Naive thymus-derived CD4-positive, alpha-beta T cell (primary cell): ENCODE measurements at regions of chr22 and their contacts with region 1.

Region 1: GRCh38 chr22:19629720-19630419 is 84.4 kb upstream of the SEPTIN5 start:
- DNase-seq: peak; percentile 65 to 91 (median 86)
- ATAC-seq: peak; percentile 97
- H3K4me3 ChIP-seq: no peak overlapping the region
- H3K4me3 Mint-ChIP-seq: peak overlapping the region in 1 of 10 donors; percentile 26
- H3K27ac ChIP-seq: no peak overlapping the region
- H3K27ac Mint-ChIP-seq: peak overlapping the region in 3 of 9 donors; percentile 6 to 56 (median 43)
- H3K4me1 ChIP-seq: peaks cover 0 to 7% of the 10 kb centered on the region in 2 donors
- H3K4me1 Mint-ChIP-seq: peaks cover 3 to 22% (median 10%) of the 10 kb centered on the region in 7 donors
- H3K27me3 ChIP-seq: no peaks in the 10 kb centered on the region
- H3K27me3 Mint-ChIP-seq: peaks cover 0 to 3% (median 0%) of the 10 kb centered on the region in 5 donors

Region 2: GRCh38 chr22:19143967-19144400 is 485.9 kb before region 1 on chr22:
- CTCF ChIA-PET with region 1: interaction called, 3 read pairs
- POLR2A ChIA-PET with region 1: no interaction called
- intact Hi-C with region 1: loop called in 1 of 2 experiments (anchors 1 kb)
- DNase-seq: peak in 6 of 9 donors; percentile 8 to 40 (median 26)
- ATAC-seq: no peak
- H3K4me3 ChIP-seq: peak overlapping the region; percentile 83
- H3K4me3 Mint-ChIP-seq: peak overlapping the region; percentile 84 to 99 (median 98)
- H3K27ac ChIP-seq: peak overlapping the region; percentile 93
- H3K27ac Mint-ChIP-seq: peak overlapping the region; percentile 91 to 99 (median 97)
- H3K4me1 ChIP-seq: no peaks in the 10 kb centered on the region
- H3K4me1 Mint-ChIP-seq: peaks cover 8 to 32% (median 18%) of the 10 kb centered on the region in 7 donors
- H3K27me3 ChIP-seq: peaks cover 0 to 1% of the 10 kb centered on the region in 2 donors
- H3K27me3 Mint-ChIP-seq: peaks cover 9 to 33% (median 11%) of the 10 kb centered on the region in 5 donors

Region 3: DNA sequence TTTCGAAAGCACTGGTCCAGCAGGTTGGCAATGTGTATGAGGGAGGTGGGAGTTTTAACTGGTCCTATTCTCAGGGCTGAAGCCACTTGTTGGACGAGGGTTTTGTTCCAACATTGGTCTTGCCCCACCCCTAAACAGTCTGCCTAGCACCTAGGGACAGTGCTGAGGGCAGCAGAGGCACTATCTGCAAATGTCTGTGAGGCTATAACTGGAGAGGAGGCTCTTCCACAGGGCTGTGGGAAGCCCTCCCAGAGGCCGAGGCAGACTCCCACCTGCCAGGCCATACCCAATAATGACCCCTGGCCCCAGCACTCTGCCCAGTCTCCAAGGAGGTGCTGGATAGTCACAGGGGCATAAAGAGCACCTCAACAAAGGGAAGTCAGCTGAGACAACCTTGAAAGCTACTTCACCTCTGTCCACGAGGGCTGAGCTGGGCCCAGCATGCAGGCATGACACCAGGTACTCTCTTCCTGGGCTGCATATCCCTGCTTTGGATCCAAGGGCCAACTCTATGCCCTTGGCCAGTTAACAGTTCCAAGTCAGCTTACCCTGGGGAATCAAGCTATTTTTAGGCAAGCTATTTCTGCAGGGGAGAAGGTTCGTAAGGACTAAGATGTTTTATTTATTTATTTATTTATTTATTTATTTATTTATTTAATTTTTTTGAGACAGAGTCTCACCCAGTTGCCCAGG is 411.2 kb before region 1 on chr22:
- CTCF ChIA-PET with region 1: no interaction called
- POLR2A ChIA-PET with region 1: no interaction called
- intact Hi-C with region 1: loop called (anchors 1 to 2 kb)
- DNase-seq: no peak
- ATAC-seq: no peak
- H3K4me3 ChIP-seq: no peak overlapping the region
- H3K4me3 Mint-ChIP-seq: no peak overlapping the region
- H3K27ac ChIP-seq: no peak overlapping the region
- H3K27ac Mint-ChIP-seq: peak overlapping the region in 1 of 9 donors; percentile 40
- H3K4me1 ChIP-seq: no peaks in the 10 kb centered on the region
- H3K4me1 Mint-ChIP-seq: peaks cover 0 to 6% (median 4%) of the 10 kb centered on the region in 7 donors
- H3K27me3 ChIP-seq: no peaks in the 10 kb centered on the region
- H3K27me3 Mint-ChIP-seq: peaks cover 0 to 4% (median 0%) of the 10 kb centered on the region in 5 donors

Region 4: DNA sequence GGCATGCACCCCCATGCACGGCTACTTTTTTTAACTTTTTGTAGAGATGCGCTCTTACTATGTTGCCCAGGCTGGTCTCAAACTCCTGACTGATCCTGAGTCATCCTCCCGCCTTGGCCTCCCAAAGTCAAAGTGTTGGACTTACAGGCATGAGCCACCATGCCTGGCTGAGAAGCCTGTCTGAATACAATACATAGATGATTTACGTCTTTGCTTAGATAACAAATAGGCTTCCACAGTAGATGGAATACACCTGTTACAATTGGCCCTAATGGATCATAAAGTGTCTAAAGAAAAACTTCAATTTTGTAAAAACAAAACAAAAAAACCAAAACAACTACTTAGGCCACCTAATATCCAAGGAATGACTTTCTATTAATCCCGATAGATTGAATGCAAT is 325.3 kb before region 1 on chr22:
- CTCF ChIA-PET with region 1: no interaction called
- POLR2A ChIA-PET with region 1: no interaction called
- intact Hi-C with region 1: no loop called
- DNase-seq: no peak
- ATAC-seq: no peak
- H3K4me3 ChIP-seq: no peak overlapping the region
- H3K4me3 Mint-ChIP-seq: no peak overlapping the region
- H3K27ac ChIP-seq: no peak overlapping the region
- H3K27ac Mint-ChIP-seq: no peak overlapping the region
- H3K4me1 ChIP-seq: no peaks in the 10 kb centered on the region
- H3K4me1 Mint-ChIP-seq: no peaks in the 10 kb centered on the region
- H3K27me3 ChIP-seq: no peaks in the 10 kb centered on the region
- H3K27me3 Mint-ChIP-seq: peaks cover 0 to 5% (median 0%) of the 10 kb centered on the region in 5 donors

Region 5: GRCh38 chr22:19447388-19448075 is 182.3 kb before region 1 on chr22 and contains the start of gene C22orf39:
- CTCF ChIA-PET with region 1: interaction called, 4 read pairs
- POLR2A ChIA-PET with region 1: interaction called, 3 read pairs
- intact Hi-C with region 1: loop called in 1 of 2 experiments (anchors 1 kb)
- DNase-seq: peak; percentile 69 to 93 (median 90)
- ATAC-seq: peak; percentile 94
- H3K4me3 ChIP-seq: peak within 1 kb of the TSS; percentile 65
- H3K4me3 Mint-ChIP-seq: peak within 1 kb of the TSS; percentile 84 to 99 (median 92)
- H3K27ac ChIP-seq: peak within 1 kb of the TSS; percentile 81
- H3K27ac Mint-ChIP-seq: peak within 1 kb of the TSS; percentile 84 to 97 (median 94)
- H3K4me1 ChIP-seq: peaks cover 18 to 26% of the 10 kb centered on the region in 2 donors
- H3K4me1 Mint-ChIP-seq: peaks cover 21 to 61% (median 48%) of the 10 kb centered on the region in 7 donors
- H3K27me3 ChIP-seq: no peaks in the 10 kb centered on the region
- H3K27me3 Mint-ChIP-seq: no peaks in the 10 kb centered on the region
- total RNA-seq, gene C22orf39: 34.2 to 44.9 (median 36.8) TPM

Region 6: GRCh38 chr22:19607192-19608002 is 22.5 kb before region 1 on chr22:
- CTCF ChIA-PET with region 1: interaction called, 14 read pairs
- POLR2A ChIA-PET with region 1: no interaction called
- intact Hi-C with region 1: no loop called
- DNase-seq: peak in 8 of 9 donors; percentile 40 to 85 (median 78)
- ATAC-seq: peak; percentile 93
- H3K4me3 ChIP-seq: no peak overlapping the region
- H3K4me3 Mint-ChIP-seq: peak overlapping the region; percentile 66 to 77 (median 69)
- H3K27ac ChIP-seq: peak overlapping the region; percentile 72
- H3K27ac Mint-ChIP-seq: peak overlapping the region; percentile 89 to 96 (median 94)
- H3K4me1 ChIP-seq: peaks cover 0 to 54% of the 10 kb centered on the region in 2 donors
- H3K4me1 Mint-ChIP-seq: peaks cover 28 to 82% (median 63%) of the 10 kb centered on the region in 7 donors
- H3K27me3 ChIP-seq: no peaks in the 10 kb centered on the region
- H3K27me3 Mint-ChIP-seq: no peaks in the 10 kb centered on the region